SK-N-SH (cell line): ENCODE measurements at regions of chr18 and their contacts with region 1.

Region 1: DNA sequence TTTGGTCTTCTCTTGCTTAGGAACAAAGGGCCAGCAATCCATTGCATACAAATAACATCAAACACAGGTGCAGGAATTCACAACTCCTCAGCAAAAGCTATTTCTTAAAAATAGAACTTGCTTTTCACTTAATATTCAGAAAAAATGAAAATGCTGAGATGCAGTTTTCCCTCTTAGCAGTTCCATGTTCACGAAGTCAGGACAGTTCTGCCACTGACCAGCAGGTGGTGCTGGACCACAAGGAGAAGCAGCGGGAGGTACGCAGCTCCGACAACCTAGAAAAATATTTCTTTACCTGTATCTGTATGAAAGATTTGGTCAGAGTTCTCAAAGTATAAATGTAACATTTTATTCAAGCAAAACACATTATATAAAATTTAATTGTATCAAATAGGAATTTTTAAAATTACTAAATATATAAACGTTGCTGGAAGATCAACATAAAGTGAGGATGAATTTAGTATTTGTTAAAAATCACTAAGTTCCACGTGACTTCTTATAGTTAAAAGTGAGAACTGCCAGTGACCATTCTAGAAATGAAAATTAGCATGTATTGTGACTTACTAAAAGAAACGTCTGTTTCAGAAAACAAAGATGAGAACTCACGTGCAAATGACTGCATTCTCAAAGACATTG is 48.8 kb downstream of the ADNP2 start:
- DNase-seq: peak; percentile 76
- H3K4me3 ChIP-seq: no peak overlapping the region
- H3K27ac ChIP-seq: no peak overlapping the region
- H3K4me1 ChIP-seq: peaks cover 0 to 3% of the 10 kb centered on the region in 2 experiments; a peak in 1 of 4 replicates
- H3K27me3 ChIP-seq: no peaks in the 10 kb centered on the region
- CTCF ChIP-seq: peak; percentile 97
- EP300 ChIP-seq: no peak
- RAD21 ChIP-seq: peak; percentile 94

Region 2: GRCh38 chr18:80171054-80171872 is 13.4 kb after region 1 on chr18:
- CTCF ChIA-PET with region 1: interaction called, 19 read pairs
- POLR2A ChIA-PET with region 1: no interaction called
- DNase-seq: peak; percentile 81
- H3K4me3 ChIP-seq: no peak overlapping the region
- H3K27ac ChIP-seq: no peak overlapping the region
- H3K4me1 ChIP-seq: no peaks in the 10 kb centered on the region
- H3K27me3 ChIP-seq: no peaks in the 10 kb centered on the region
- CTCF ChIP-seq: peak; percentile 71
- EP300 ChIP-seq: no peak
- RAD21 ChIP-seq: peak; percentile 54

Region 3: GRCh38 chr18:80183273-80184050 is 25.6 kb after region 1 on chr18:
- CTCF ChIA-PET with region 1: interaction called, 13 read pairs
- POLR2A ChIA-PET with region 1: no interaction called
- DNase-seq: no peak
- H3K4me3 ChIP-seq: no peak overlapping the region
- H3K27ac ChIP-seq: no peak overlapping the region
- H3K4me1 ChIP-seq: no peaks in the 10 kb centered on the region; a peak in 1 of 4 replicates
- H3K27me3 ChIP-seq: no peaks in the 10 kb centered on the region
- CTCF ChIP-seq: no peak
- EP300 ChIP-seq: no peak
- RAD21 ChIP-seq: no peak

Region 4: DNA sequence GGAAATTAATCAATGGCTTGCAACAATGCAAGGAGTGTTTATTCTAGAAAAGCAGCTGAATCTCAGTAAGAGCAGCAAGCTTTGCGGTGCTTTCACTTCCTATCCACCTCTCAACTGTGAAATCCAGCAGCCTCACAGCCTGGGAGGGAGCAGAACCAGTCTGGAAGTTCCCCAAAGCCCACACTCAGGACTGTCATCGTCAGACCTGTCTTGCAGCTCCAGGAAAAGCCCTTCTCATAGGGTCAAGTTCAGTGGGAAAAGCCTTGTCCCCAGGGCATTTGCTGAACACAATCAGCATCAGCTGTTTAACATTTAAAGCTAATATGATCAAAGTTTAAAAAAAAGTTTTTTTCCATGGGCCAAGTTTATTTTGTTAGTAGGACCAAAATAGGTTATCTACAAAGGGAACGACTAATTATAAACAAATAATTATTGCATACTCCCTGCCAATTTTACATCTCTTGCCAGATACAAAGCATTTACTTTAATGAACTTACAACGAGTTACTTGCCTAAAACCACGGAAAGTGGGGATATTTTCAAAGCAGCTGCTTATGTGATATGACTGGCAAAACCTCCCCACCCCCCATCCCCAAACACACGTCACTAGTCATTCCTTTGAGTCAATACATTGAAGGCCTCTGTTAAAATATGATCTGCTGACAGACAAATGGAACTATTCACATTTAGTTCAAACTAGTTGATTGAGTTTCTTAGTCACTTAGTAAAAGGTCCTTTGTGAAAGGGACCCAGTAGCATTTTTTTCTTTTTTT is 52.7 kb after region 1 on chr18:
- CTCF ChIA-PET with region 1: interaction called, 15 read pairs
- POLR2A ChIA-PET with region 1: no interaction called
- DNase-seq: no peak
- H3K4me3 ChIP-seq: no peak overlapping the region
- H3K27ac ChIP-seq: no peak overlapping the region
- H3K4me1 ChIP-seq: peaks cover 0 to 3% of the 10 kb centered on the region in 2 experiments; a peak in 1 of 4 replicates
- H3K27me3 ChIP-seq: no peaks in the 10 kb centered on the region
- CTCF ChIP-seq: no peak
- EP300 ChIP-seq: no peak
- RAD21 ChIP-seq: no peak

Region 5: GRCh38 chr18:80247403-80247916 is 89.6 kb after region 1 on chr18 and contains the start of gene PARD6G:
- CTCF ChIA-PET with region 1: interaction called, 152 read pairs
- POLR2A ChIA-PET with region 1: no interaction called
- DNase-seq: peak; percentile 98
- H3K4me3 ChIP-seq: peak within 1 kb of the TSS; percentile 81 to 94
- H3K27ac ChIP-seq: peak within 1 kb of the TSS in 1 of 2 experiments; percentile 40; a peak in 1 of 4 replicates
- H3K4me1 ChIP-seq: peaks cover 8 to 12% of the 10 kb centered on the region in 2 experiments; a peak in 2 of 4 replicates
- H3K27me3 ChIP-seq: no peaks in the 10 kb centered on the region
- CTCF ChIP-seq: peak; percentile 25; the same call in 1 of the 2 replicates
- EP300 ChIP-seq: no peak
- RAD21 ChIP-seq: no peak
- polyA plus RNA-seq, gene PARD6G: 4.0 and 4.3 TPM in 2 replicates